Panc1 (cell line): ENCODE measurements at regions of chr4 and their contacts with region 1.

Region 1: DNA sequence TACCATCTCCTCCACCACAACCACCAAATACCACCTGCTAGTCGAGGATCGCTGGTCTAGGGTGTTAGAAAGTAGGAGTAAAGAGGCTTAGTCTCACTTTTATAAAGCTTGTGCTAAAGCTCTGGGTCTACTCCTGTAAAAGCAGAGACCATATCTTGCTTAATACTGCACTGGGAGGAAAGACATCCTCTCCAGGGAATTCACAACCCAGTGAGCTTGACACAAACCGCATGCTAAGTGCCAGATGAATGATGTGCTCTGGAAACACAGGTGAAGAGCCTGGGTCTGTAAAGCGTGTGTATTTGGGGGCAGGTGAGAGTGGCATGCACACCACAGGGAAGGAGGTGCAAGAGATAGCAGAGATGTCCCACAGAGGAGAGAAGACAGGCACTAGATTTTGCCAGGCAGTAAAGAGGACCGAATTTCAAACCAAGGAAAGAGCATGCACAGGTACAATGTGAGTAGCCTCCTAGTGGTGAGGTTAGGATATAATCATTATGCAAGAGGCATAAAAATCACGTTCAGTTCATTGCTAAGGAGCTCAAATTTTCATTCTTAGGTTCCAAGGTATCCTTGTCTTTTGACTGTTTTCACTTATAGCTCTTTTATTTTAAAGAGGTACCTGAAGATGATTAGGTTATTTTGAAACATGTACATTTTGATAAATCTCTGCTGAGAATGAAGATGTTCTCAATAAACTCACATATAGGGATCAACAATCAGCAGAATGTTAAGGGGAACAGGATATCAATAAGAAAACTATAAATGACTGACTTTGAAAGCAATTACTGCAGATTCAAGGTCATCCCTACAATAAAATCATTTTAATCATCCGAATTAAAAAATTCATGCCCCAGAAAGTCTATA is 20.7 kb downstream of the TAPT1 start:
- DNase-seq: no peak
- ATAC-seq: peak; percentile 60; the same call in 1 of the 2 replicates
- H3K4me3 ChIP-seq: no peak overlapping the region
- H3K27ac ChIP-seq: no peak overlapping the region
- H3K4me1 ChIP-seq: no peaks in the 10 kb centered on the region
- H3K27me3 ChIP-seq: no peaks in the 10 kb centered on the region
- CTCF ChIP-seq: peak; percentile 70

Region 2: GRCh38 chr4:15836362-15836761 is 369.2 kb before region 1 on chr4:
- CTCF ChIA-PET with region 1: interaction called, 10 read pairs
- POLR2A ChIA-PET with region 1: no interaction called
- in situ Hi-C with region 1: no loop called
- intact Hi-C with region 1: no loop called
- DNase-seq: no peak
- ATAC-seq: no peak
- H3K4me3 ChIP-seq: no peak overlapping the region
- H3K27ac ChIP-seq: no peak overlapping the region
- H3K4me1 ChIP-seq: no peaks in the 10 kb centered on the region
- H3K27me3 ChIP-seq: no peaks in the 10 kb centered on the region
- CTCF ChIP-seq: no peak